ENCODE measurements at regions of chr1 and their contacts with region 1.

Region 1: GRCh38 chr1:160733898-160734297 is 5.1 kb upstream of the SLAMF7 start:
- DNase-seq: no peak
- H3K4me3 ChIP-seq: no peak overlapping the region
- H3K27ac ChIP-seq: no peak overlapping the region
- H3K4me1 ChIP-seq: no peaks in the 10 kb centered on the region
- H3K27me3 ChIP-seq: no peaks in the 10 kb centered on the region
- CTCF ChIP-seq: no peak
- EP300 ChIP-seq: no peak
- POLR2A ChIP-seq: no peak

Region 2: DNA sequence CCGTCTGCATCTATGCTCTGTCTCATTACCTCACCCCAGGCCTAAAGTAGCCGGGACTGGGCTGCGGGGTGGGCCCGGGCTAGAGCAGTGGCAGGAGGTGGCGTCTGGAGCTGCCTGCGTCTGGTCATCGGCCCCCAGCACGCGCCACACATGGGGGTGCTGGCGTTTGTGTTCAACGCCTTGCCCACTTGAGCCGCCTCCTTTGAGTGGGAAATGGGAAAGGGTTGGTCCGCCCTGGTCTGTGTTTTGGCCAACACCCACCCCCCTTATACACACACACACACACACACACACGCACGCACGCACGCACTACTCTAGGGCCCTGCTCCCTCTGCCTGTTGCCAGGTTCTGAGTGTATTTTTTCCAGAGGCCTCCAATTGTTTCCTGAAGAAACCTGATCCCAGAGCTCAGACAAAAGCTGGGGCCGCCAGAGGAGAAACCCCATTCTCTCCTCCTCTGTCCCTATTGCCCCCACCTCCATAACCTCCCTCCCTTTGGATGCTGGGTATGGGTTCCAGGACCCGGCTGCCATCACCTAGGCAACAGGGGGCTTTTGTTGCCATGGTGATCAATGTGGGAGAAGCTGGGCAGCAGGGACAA is 323.4 kb before region 1 on chr1:
- in situ Hi-C with region 1: no loop called
- intact Hi-C with region 1: no loop called
- DNase-seq: no peak
- H3K4me3 ChIP-seq: no peak overlapping the region
- H3K27ac ChIP-seq: no peak overlapping the region
- H3K4me1 ChIP-seq: peaks cover 0 to 11% (median 5%) of the 10 kb centered on the region in 4 donors
- H3K27me3 ChIP-seq: no peaks in the 10 kb centered on the region
- CTCF ChIP-seq: no peak
- EP300 ChIP-seq: no peak
- POLR2A ChIP-seq: no peak

Region 3: DNA sequence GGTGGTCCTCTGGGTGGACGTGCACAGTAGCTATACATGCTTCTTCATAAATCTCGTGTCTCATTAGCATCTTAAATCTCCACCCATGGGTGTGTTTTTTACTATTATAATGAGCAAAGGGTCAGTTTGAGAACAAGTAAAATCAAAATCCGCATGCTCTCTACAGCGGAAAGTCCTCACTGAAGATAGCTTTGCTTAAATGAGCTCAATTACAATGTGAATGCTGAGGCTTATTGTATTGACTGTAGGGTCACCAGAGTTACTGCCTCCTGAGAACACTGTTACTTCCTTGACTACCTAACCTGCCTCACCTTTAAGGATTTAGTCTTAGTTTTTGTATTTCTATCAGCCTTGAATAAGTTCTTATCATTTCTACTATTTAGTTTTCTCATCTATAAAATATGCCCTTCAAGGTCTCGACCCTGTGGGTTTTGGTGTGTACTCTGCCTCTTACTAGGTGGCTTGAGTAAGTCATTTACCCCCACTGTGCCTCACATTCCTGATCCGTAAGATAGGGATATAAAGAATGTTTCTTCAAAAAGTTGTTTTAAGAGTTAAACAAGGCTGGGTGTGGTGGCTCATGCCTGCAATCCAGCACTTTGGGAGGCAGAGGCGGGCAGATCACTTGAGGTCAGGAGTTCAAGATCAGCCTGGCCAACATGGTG is 13.1 kb after region 1 on chr1:
- in situ Hi-C with region 1: no loop called
- intact Hi-C with region 1: loop called (anchors 1 kb)
- DNase-seq: no peak
- H3K4me3 ChIP-seq: no peak overlapping the region
- H3K27ac ChIP-seq: no peak overlapping the region
- H3K4me1 ChIP-seq: no peaks in the 10 kb centered on the region
- H3K27me3 ChIP-seq: no peaks in the 10 kb centered on the region
- CTCF ChIP-seq: no peak
- EP300 ChIP-seq: no peak
- POLR2A ChIP-seq: no peak

Measured in transverse colon (tissue), 4 donors.